Ascending aorta (tissue), 2 donors: ENCODE measurements at regions of chr2 and their contacts with region 1.

Region 1: DNA sequence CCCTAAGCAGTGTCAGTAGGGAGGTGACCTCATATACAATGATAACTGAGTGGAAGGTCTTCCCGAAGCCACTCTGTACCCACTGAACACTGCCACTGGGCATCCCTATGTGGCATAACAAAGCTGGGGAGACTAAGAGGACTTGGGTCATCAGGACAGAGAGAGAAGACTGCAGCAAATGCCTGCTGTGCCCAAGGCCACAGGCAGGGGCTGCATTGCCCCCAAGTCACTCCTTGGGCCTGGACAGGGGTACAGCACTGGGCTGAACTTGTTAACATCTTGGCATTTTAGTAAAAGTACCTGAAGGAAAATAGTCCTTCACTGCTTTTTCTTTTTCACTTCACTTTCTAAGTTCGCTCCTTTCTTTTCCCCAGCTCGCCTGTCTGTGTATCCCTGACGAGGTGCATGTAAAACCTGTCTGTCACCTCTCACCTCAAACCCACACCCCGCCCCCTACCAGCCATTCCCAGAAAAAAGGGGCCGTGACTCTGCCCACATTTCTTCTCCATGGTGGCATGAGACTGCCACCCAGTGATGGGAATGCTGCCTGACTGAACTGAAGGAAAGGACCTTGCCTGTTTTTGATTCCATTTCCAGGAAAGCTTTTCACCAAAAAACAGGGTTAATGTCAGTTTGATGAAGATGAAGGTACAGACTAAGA is 62.9 kb downstream of the MTHFD2 start:
- DNase-seq: peak in 1 of 2 donors; percentile 73
- H3K4me3 ChIP-seq: no peak overlapping the region
- H3K27ac ChIP-seq: no peak overlapping the region
- H3K4me1 ChIP-seq: no peaks in the 10 kb centered on the region
- H3K27me3 ChIP-seq: no peaks in the 10 kb centered on the region
- CTCF ChIP-seq: peak; percentile 49 to 77 (median 65)

Region 2: DNA sequence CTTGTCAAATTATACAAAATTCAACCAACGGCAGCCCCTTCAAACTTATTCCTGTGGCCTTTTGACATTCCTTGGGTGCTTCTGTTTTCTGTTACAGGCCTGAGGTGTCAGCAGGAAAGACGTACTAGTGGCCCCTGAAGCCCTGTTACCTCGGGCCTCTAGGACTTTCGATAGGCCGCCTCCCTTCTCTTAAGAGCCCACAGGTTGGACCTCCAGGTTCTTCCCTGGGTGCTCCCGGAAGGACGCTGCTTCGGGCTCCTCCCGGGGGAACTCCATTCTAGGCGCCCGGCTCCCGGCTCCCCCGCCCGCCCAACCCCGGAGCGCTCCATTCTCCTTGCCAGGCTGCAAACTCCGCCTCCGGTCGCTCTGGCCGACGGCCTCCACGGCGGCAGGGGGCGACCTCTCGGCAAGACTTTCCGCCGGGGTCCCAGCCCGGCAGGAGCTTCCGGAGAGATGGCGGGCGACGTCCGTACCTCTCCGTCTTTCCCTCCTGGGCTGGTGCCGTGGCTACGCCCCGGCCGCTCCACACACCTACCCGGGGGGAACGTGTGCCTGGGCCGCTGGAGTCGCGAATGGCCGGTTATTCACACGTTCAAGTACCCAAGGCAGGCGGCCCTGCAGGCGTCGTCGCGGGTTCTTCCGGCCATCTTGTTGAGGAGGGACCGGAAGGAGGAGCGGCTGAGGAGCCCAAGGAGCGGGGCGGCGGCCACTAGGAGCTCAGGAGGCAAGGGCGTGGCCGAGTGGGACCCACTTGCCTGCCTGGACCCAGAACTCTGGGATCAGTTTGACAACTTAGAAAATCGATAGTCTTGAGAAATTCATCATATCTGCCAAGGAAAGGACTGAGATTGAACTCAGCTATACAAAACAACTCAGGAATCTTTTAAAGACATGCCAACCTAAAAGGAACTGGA is 141.2 kb before region 1 on chr2:
- intact Hi-C with region 1: loop called (anchors 5 kb)
- DNase-seq: peak in 1 of 2 donors; percentile 89
- H3K4me3 ChIP-seq: peak overlapping the region; percentile 70 to 78
- H3K27ac ChIP-seq: peak overlapping the region; percentile 84 to 87
- H3K4me1 ChIP-seq: no peaks in the 10 kb centered on the region
- H3K27me3 ChIP-seq: no peaks in the 10 kb centered on the region
- CTCF ChIP-seq: peak; percentile 57 to 79 (median 76)

Region 3: DNA sequence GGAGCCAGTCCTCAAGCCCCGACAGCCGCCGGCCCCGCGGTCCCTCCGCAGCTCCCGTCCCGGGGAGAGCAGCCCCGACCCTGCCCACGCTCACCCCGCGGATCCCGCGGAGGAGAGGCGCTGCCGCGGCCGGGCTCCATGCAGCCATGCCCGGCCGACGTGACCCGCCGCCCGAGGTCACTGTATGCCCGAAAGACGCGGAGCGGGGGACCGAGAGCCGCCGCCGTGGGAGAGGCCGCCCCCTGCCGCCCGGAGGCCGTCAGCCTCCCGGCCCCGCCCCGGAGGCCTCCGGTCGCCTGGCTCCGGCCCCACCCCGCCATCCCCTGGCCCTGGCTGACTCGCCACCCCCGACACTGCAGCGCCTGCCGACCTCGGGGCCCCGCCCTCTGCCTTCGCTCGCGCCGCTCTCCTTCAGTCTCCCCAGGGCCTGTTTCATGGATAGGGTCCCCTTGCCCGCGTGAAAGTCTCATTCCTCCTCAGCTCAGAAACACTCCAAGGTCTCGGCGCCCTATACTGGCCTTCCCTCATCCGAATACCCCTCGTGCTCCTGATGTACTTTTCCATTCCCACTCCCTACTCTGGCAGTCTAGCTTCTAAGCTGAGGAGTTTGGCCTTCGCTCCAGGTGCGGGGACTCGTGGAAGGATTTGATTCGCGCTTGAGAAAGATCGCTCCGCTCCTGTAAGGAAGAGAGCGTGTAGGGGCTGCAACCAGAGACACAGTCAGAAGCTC is 113.4 kb before region 1 on chr2 and contains the start of gene BOLA3:
- intact Hi-C with region 1: loop called (anchors 2 kb)
- DNase-seq: peak; percentile 33 to 89
- H3K4me3 ChIP-seq: peak within 1 kb of the TSS; percentile 67 to 80
- H3K27ac ChIP-seq: peak within 1 kb of the TSS; percentile 54 to 74
- H3K4me1 ChIP-seq: peaks cover 5 to 19% of the 10 kb centered on the region in 2 donors
- H3K27me3 ChIP-seq: no peaks in the 10 kb centered on the region
- CTCF ChIP-seq: peak; percentile 50 to 68 (median 61)
- total RNA-seq, gene BOLA3: 47.3 TPM

Region 4: DNA sequence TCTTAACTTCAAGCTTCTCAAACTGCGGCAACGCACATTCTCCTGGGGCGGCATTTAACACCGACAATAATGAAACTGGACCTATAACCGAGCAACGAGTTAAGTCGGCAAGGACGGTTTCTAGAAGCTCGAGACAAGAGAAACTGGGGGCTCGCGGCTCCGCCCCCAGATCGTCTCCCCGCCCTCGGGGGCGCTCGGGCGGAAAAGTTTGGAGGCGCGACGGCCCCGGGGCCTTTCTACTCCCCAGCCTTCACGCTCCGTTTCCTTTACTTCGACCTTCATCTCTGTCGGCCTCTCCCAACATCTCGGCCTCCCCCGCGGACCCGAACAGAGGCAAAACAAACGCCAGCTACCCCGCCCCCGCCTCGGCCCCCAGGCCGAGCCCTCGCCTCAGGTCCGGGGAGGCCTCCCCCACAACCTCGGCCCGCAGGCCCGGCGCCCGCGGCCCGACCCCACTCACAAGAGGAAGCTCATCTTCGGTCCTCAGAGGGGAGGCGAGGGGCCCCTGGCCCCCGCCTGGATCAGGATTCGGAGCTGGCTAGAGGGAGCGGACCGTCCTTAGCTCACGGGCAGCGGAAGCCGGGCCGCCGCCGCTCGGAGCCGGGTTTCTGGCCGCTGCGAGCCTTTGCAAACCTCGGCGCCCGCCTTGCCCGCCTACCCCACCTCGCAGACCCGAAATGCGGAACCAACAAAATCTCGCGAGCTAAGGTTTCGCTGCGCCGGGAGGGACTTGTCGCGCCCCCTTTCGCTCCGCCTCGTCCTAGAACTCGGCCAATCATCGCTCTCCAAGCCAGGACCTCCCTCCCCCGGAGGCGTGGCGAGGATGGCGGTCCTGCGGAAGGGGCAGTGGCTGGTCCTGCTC is 82.9 kb before region 1 on chr2 and contains the start of gene MOB1A:
- intact Hi-C with region 1: loop called (anchors 5 kb)
- DNase-seq: peak; percentile 91 to 99
- H3K4me3 ChIP-seq: peak within 1 kb of the TSS; percentile 76 to 100
- H3K27ac ChIP-seq: peak within 1 kb of the TSS; percentile 88 to 98
- H3K4me1 ChIP-seq: peaks cover 0 to 26% of the 10 kb centered on the region in 2 donors
- H3K27me3 ChIP-seq: no peaks in the 10 kb centered on the region
- CTCF ChIP-seq: no peak
- total RNA-seq, gene MOB1A: 56.8 TPM

Region 5: GRCh38 chr2:74198461-74199274 is 62.7 kb before region 1 on chr2 and contains the start of gene MTHFD2:
- intact Hi-C with region 1: loop called (anchors 5 kb)
- DNase-seq: peak; percentile 87 to 97
- H3K4me3 ChIP-seq: peak within 1 kb of the TSS; percentile 82 to 90
- H3K27ac ChIP-seq: peak within 1 kb of the TSS; percentile 97 to 98
- H3K4me1 ChIP-seq: peaks cover 15 to 23% of the 10 kb centered on the region in 2 donors
- H3K27me3 ChIP-seq: no peaks in the 10 kb centered on the region
- CTCF ChIP-seq: peak; percentile 83 to 90 (median 86)
- total RNA-seq, gene MTHFD2: 31.7 TPM

Region 6: GRCh38 chr2:74226648-74227213 is 34.6 kb before region 1 on chr2:
- intact Hi-C with region 1: loop called (anchors 2 kb)
- DNase-seq: peak in 1 of 2 donors; percentile 82
- H3K4me3 ChIP-seq: peak overlapping the region in 1 of 2 donors; percentile 14
- H3K27ac ChIP-seq: peak overlapping the region; percentile 66 to 75
- H3K4me1 ChIP-seq: peaks cover 9 to 28% of the 10 kb centered on the region in 2 donors
- H3K27me3 ChIP-seq: no peaks in the 10 kb centered on the region
- CTCF ChIP-seq: no peak